ENCODE measurements at regions of chr2 and their contacts with region 1.

Region 1: DNA sequence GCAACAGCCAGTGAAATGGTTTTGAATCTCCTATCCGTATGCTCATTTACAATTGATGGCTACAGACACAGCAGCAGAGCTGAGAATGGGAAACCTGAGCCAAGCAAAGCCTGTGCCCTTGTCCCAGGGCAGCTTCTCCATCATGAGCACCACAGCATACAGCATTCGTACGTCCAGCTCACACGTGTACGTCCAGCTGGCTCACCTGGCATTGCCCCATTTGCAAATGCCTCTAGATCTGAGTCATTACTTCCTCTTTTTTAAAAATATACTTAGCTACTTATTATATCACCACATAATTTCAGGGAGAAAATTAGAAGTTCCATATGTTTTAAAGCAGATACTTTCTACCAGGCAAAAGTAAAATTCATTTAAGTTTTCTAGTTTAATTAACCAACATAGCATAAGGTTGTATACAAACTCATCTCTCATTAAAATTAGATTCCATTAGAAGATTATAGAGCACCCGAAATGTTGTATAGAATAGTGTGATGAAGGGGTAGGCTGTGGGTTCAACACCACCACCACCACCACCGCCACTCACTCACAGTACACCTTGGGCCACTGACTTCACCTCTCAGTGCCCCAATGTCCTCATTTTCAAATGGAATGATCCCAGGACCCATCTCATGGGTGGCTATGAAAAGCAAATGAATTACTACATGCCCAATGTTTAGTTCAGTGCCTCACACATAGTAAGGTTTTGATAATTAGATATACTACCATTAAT is 31.4 kb upstream of the TMEM177 start:
- DNase-seq: peak; percentile 47 to 65
- H3K4me3 ChIP-seq: no peak overlapping the region
- H3K27ac ChIP-seq: no peak overlapping the region
- H3K4me1 ChIP-seq: peaks cover 26% of the 10 kb centered on the region
- H3K27me3 ChIP-seq: no peaks in the 10 kb centered on the region
- CTCF ChIP-seq: no peak

Region 2: GRCh38 chr2:119431155-119431975 is 216.2 kb before region 1 on chr2 and contains the start of gene TMEM37:
- CTCF ChIA-PET with region 1: interaction called, 14 read pairs
- POLR2A ChIA-PET with region 1: no interaction called
- intact Hi-C with region 1: no loop called
- DNase-seq: peak; percentile 63 to 80
- H3K4me3 ChIP-seq: peak within 1 kb of the TSS; percentile 53; the same call in 1 of the 2 replicates
- H3K27ac ChIP-seq: no peak within 1 kb of the TSS
- H3K4me1 ChIP-seq: peaks cover 36% of the 10 kb centered on the region
- H3K27me3 ChIP-seq: no peaks in the 10 kb centered on the region
- CTCF ChIP-seq: no peak
- total RNA-seq, gene TMEM37: 1.2 TPM in 2 replicates

Region 3: GRCh38 chr2:119544075-119544938 is 103.3 kb before region 1 on chr2 and contains the start of gene CFAP221:
- CTCF ChIA-PET with region 1: no interaction called
- POLR2A ChIA-PET with region 1: no interaction called
- intact Hi-C with region 1: no loop called
- DNase-seq: peak in 1 of 2 experiments; percentile 47
- H3K4me3 ChIP-seq: peak within 1 kb of the TSS; percentile 48
- H3K27ac ChIP-seq: no peak within 1 kb of the TSS
- H3K4me1 ChIP-seq: no peaks in the 10 kb centered on the region
- H3K27me3 ChIP-seq: peaks cover 68% of the 10 kb centered on the region
- CTCF ChIP-seq: no peak
- total RNA-seq, gene CFAP221: not detected in 2 replicates

Region 4: GRCh38 chr2:119630121-119630520 is 17.5 kb before region 1 on chr2:
- CTCF ChIA-PET with region 1: no interaction called
- POLR2A ChIA-PET with region 1: no interaction called
- intact Hi-C with region 1: no loop called
- DNase-seq: no peak
- H3K4me3 ChIP-seq: no peak overlapping the region
- H3K27ac ChIP-seq: no peak overlapping the region
- H3K4me1 ChIP-seq: no peaks in the 10 kb centered on the region
- H3K27me3 ChIP-seq: peaks cover 6% of the 10 kb centered on the region; the same call in 1 of the 2 replicates
- CTCF ChIP-seq: no peak

Measured in PC-9 (cell line).